ENCODE measurements at regions of chr6 and their contacts with region 1.

Region 1: GRCh38 chr6:16712931-16713484 is 48.3 kb downstream of the ATXN1 start:
- DNase-seq: peak in 1 of 2 experiments; percentile 74
- ATAC-seq: peak; percentile 79 to 83
- H3K4me3 ChIP-seq: peak overlapping the region; percentile 3; the same call in 2 of the 3 replicates
- H3K27ac ChIP-seq: peak overlapping the region; percentile 79 to 83
- H3K4me1 ChIP-seq: peaks cover 38% of the 10 kb centered on the region
- CTCF ChIP-seq: peak; percentile 39
- EP300 ChIP-seq: peak; percentile 14 to 32; a peak in 2 of 5 replicates
- POLR2A ChIP-seq: no peak
- RAD21 ChIP-seq: peak; percentile 22 to 32; a peak in 2 of 5 replicates

Region 2: DNA sequence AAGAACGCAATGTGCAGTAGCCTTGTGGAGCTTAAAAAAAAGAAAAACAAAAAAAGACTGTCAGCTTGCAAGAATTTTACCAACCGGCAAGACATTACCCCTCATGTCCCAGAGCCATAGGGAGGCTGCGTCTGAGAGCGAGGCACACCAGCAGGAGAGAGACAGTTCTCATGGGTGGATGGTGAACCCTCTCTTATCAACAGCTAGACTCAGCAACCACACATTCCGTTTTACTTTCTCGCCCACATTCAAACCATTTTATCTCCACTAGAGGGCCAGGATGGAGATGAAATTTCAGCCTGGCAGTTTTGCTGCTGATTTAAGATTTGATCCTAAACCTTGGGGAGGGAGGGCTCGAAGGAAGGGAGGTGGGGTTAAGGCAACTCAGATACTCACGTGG is 198.8 kb before region 1 on chr6:
- CTCF ChIA-PET with region 1: interaction called, 24 read pairs
- POLR2A ChIA-PET with region 1: no interaction called
- DNase-seq: peak; percentile 40 to 48
- ATAC-seq: peak; percentile 64 to 71; a peak in 5 of 6 replicates
- H3K4me3 ChIP-seq: no peak overlapping the region
- H3K27ac ChIP-seq: no peak overlapping the region
- H3K4me1 ChIP-seq: no peaks in the 10 kb centered on the region; the same call in 2 of the 3 replicates
- CTCF ChIP-seq: peak; percentile 39
- EP300 ChIP-seq: no peak
- POLR2A ChIP-seq: no peak
- RAD21 ChIP-seq: peak; percentile 54

Region 3: GRCh38 chr6:16731478-16732051 is 18.6 kb after region 1 on chr6:
- CTCF ChIA-PET with region 1: no interaction called
- POLR2A ChIA-PET with region 1: no interaction called
- DNase-seq: no peak
- ATAC-seq: no peak
- H3K4me3 ChIP-seq: no peak overlapping the region
- H3K27ac ChIP-seq: no peak overlapping the region
- H3K4me1 ChIP-seq: peaks cover 53% of the 10 kb centered on the region
- CTCF ChIP-seq: no peak
- EP300 ChIP-seq: no peak
- POLR2A ChIP-seq: no peak
- RAD21 ChIP-seq: no peak

Region 4: DNA sequence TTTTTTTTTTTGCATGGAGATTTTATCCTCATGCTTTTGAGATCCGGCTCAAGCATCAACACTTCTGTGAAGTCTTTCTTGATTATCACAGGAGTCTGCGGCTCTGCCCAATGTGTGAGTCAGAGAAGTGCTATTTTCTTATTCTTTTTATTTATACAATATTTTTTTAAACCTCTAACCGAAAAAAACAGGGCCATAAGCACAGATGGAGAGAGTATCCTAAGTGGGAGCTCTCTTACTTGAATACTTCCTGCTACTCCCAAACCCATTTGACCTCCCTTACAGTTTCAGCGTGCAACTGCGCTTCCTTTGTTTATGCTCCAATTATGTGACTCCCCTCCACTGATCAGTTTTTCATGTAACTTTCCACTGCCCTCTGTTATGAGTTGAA is 57.0 kb after region 1 on chr6:
- CTCF ChIA-PET with region 1: no interaction called
- POLR2A ChIA-PET with region 1: no interaction called
- DNase-seq: peak in 1 of 2 experiments; percentile 28
- ATAC-seq: peak; percentile 8 to 37; a peak in 3 of 6 replicates
- H3K4me3 ChIP-seq: 0 out of 3 replicates have a peak overlapping the region, but pooled peaks have one; percentile 0
- H3K27ac ChIP-seq: peak overlapping the region; percentile 68 to 85
- H3K4me1 ChIP-seq: peaks cover 52% of the 10 kb centered on the region
- CTCF ChIP-seq: no peak
- EP300 ChIP-seq: no peak
- POLR2A ChIP-seq: no peak
- RAD21 ChIP-seq: no peak